CD4-positive, alpha-beta T cell (primary cell): ENCODE measurements at regions of chr3 and their contacts with region 1.

Region 1: DNA sequence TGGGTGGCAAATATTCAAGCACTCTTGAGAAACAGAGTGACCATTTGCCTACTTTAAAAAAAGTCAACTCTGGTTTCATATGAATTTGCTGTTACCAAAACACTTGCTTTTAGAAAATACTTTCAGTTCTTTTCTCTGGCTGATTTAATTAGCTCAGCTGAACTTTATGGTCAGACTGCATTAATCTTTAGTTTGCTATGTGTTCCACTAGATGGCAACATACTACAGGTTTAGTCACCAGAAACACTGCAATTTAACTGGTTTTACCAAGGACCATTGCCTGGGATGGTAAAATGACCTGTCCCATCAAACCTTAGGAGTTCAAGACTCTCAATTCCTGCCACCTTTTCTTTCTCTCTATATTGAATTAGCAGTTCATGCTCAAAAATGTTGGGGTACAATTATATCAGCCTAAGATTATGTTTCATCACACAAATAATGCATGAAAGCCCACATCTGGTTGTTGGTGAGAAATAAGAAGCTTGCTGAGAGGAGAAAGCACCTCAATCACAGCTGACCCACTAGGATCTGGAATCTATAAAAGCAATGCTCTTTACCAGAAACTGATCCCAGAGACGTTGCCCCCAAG is 14.2 kb downstream of the EIF4E3 start:
- DNase-seq: peak in 3 of 14 experiments; percentile 68 to 72 (median 71)
- ATAC-seq: peak; percentile 58
- H3K4me3 ChIP-seq: no peak overlapping the region
- H3K4me3 Mint-ChIP-seq: peak overlapping the region; percentile 26
- H3K27ac ChIP-seq: no peak overlapping the region
- H3K27ac Mint-ChIP-seq: peak overlapping the region; percentile 80
- H3K4me1 ChIP-seq: peaks cover 50% of the 10 kb centered on the region
- H3K4me1 Mint-ChIP-seq: peaks cover 92% of the 10 kb centered on the region
- H3K27me3 ChIP-seq: no peaks in the 10 kb centered on the region
- H3K27me3 Mint-ChIP-seq: no peaks in the 10 kb centered on the region
- CTCF ChIP-seq: peak; percentile 86

Region 2: DNA sequence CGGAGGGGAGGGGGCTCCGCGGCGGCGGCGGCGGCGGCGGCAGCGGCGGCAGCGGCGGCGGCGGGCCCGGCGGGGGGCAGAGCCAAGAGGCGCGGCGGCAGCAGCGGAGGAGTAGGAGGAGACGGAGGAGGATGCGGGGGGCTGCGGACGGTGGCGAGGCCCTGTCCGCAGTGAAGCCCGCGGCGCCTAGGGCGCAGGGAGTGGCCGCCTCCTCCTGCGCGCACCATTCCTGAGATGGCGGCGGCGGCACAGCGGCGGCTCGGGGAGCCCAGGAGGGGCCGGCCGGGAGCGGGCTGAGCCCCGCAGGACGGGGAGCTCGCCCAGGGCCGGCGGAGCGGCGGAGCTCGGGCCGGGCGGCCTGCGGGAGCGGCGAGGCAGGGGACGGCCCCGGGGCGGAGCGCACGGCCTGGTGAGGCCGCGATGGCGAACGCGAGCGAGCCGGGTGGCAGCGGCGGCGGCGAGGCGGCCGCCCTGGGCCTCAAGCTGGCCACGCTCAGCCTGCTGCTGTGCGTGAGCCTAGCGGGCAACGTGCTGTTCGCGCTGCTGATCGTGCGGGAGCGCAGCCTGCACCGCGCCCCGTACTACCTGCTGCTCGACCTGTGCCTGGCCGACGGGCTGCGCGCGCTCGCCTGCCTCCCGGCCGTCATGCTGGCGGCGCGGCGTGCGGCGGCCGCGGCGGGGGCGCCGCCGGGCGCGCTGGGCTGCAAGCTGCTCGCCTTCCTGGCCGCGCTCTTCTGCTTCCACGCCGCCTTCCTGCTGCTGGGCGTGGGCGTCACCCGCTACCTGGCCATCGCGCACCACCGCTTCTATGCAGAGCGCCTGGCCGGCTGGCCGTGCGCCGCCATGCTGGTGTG is 42.9 kb after region 1 on chr3 and contains the start of gene GPR27:
- CTCF ChIA-PET with region 1: no interaction called
- POLR2A ChIA-PET with region 1: no interaction called
- intact Hi-C with region 1: loop called in 1 of 2 experiments (anchors 5 kb)
- DNase-seq: peak in 4 of 14 experiments; percentile 11 to 48 (median 32)
- ATAC-seq: peak; percentile 58
- H3K4me3 ChIP-seq: no peak within 1 kb of the TSS
- H3K4me3 Mint-ChIP-seq: peak within 1 kb of the TSS; percentile 86
- H3K27ac ChIP-seq: no peak within 1 kb of the TSS
- H3K27ac Mint-ChIP-seq: no peak within 1 kb of the TSS
- H3K4me1 ChIP-seq: peaks cover 10% of the 10 kb centered on the region
- H3K4me1 Mint-ChIP-seq: peaks cover 8% of the 10 kb centered on the region
- H3K27me3 ChIP-seq: peaks cover 24 to 27% of the 10 kb centered on the region in 2 experiments
- H3K27me3 Mint-ChIP-seq: peaks cover 49% of the 10 kb centered on the region
- CTCF ChIP-seq: no peak
- total RNA-seq, gene GPR27: 0.84 to 1.1 TPM

Region 3: DNA sequence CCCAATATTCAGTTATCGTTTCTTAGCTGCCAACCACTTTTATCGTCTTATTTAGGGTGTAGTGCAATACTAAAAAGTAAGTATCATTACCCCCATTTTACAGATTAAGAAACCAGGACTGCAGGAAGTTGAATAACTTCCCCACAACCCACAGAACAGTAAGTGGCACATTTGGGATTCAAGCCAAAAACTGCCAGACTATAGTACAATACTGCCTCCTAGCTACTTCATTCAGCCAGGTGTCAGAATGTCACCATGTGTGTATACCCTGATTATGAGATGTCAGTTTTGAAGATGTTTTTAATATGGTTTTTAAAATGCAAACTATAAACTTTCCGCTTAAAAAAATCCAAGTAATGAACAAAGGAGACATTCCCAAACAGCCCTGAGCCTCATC is 148.1 kb after region 1 on chr3:
- CTCF ChIA-PET with region 1: interaction called, 10 read pairs
- POLR2A ChIA-PET with region 1: interaction called, 3 read pairs
- intact Hi-C with region 1: loop called (anchors 1 kb)
- DNase-seq: peak in 5 of 14 experiments; percentile 8 to 79 (median 73)
- ATAC-seq: peak; percentile 82
- H3K4me3 ChIP-seq: no peak overlapping the region
- H3K4me3 Mint-ChIP-seq: no peak overlapping the region
- H3K27ac ChIP-seq: no peak overlapping the region
- H3K27ac Mint-ChIP-seq: no peak overlapping the region
- H3K4me1 ChIP-seq: peaks cover 5% of the 10 kb centered on the region
- H3K4me1 Mint-ChIP-seq: peaks cover 6% of the 10 kb centered on the region
- H3K27me3 ChIP-seq: peaks cover 0 to 7% of the 10 kb centered on the region in 2 experiments
- H3K27me3 Mint-ChIP-seq: peaks cover 25% of the 10 kb centered on the region
- CTCF ChIP-seq: peak; percentile 66

Region 4: DNA sequence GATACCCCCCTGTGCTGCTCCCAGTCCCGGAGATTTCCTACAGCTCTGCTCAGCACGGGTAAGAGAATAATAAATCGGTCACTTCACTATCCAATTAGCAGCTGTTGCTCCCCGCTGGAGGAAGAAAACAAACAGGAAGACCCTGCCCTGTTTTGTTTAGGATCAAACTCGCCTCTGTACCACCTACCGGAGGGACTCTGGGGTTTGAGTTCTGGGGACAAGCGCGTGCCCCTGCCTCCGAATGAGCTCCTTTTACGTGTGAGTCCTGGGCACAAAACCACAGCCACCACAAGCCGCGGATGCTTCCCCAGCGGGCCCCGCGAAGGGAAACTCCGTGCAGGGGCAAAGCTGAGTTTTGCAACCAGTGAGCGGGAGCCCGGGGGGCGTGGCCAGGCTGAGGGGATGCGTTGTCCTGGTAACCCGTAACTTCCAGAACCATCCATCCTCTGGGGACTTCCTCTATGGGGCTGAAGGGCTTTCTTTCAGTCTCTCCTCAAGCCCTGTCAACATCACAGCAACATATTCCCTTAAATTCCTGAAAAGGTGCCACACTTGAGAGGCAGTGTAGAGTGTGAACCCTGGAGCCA is 389.7 kb after region 1 on chr3:
- CTCF ChIA-PET with region 1: no interaction called
- POLR2A ChIA-PET with region 1: no interaction called
- intact Hi-C with region 1: loop called in 1 of 2 experiments (anchors 10 kb)
- DNase-seq: peak; percentile 53 to 95 (median 76)
- ATAC-seq: peak; percentile 91
- H3K4me3 ChIP-seq: peak overlapping the region; percentile 51
- H3K4me3 Mint-ChIP-seq: peak overlapping the region; percentile 84
- H3K27ac ChIP-seq: peak overlapping the region in 1 of 2 donors; percentile 59
- H3K27ac Mint-ChIP-seq: peak overlapping the region; percentile 75
- H3K4me1 ChIP-seq: peaks cover 22% of the 10 kb centered on the region
- H3K4me1 Mint-ChIP-seq: peaks cover 26% of the 10 kb centered on the region
- H3K27me3 ChIP-seq: peaks cover 0 to 3% of the 10 kb centered on the region in 2 experiments
- H3K27me3 Mint-ChIP-seq: no peaks in the 10 kb centered on the region
- CTCF ChIP-seq: no peak

Region 5: GRCh38 chr3:72265256-72266015 is 554.4 kb after region 1 on chr3:
- CTCF ChIA-PET with region 1: no interaction called
- POLR2A ChIA-PET with region 1: no interaction called
- intact Hi-C with region 1: no loop called
- DNase-seq: no peak
- ATAC-seq: no peak
- H3K4me3 ChIP-seq: no peak overlapping the region
- H3K4me3 Mint-ChIP-seq: no peak overlapping the region
- H3K27ac ChIP-seq: no peak overlapping the region
- H3K27ac Mint-ChIP-seq: no peak overlapping the region
- H3K4me1 ChIP-seq: peaks cover 9% of the 10 kb centered on the region
- H3K4me1 Mint-ChIP-seq: peaks cover 29% of the 10 kb centered on the region
- H3K27me3 ChIP-seq: no peaks in the 10 kb centered on the region
- H3K27me3 Mint-ChIP-seq: no peaks in the 10 kb centered on the region
- CTCF ChIP-seq: no peak